A549 (cell line): ENCODE measurements at regions of chr17 and their contacts with region 1.

Region 1: DNA sequence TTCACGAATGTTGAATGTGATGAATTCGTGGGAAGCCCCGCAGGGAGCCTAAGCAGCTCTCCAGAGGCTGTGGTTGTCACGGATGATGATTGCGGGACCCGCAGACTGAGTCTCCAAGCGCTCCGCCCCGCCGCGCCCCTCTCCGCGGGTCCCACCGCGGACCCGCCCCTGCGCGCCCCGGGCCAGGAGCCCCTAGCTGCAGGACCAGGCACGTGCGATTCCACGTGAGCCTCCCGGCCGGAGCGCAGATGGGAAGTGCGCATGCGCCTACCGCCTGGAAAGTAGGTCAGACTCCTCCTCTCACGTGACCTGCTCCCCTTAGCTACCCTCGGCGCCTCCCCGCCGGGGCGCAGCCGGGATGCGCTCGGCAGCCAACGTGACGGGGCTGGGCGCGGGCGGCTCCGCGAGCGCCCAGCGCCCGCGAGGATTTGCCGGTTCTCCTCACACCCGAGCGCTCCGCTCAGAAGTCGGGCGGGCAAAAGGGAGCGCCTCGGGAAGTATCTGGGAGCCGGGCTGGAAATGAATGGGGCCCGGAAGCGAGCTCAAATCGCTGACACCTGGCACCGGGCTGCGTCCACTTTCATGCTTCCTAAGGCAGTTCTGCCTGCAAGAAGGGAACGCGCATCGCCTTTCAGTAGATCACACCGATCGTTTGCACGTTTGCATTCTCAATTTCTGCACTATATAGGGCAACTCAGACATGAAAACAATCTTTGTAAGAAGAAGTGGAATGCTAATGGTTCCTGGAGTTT is 26.4 kb upstream of the HLF start:
- DNase-seq: peak; percentile 94 to 99
- ATAC-seq: peak; percentile 97 to 99
- H3K4me3 ChIP-seq: peak overlapping the region; percentile 56
- H3K27ac ChIP-seq: peak overlapping the region; percentile 70 to 76
- H3K4me1 ChIP-seq: peaks cover 12% of the 10 kb centered on the region; the same call in 2 of the 3 replicates
- CTCF ChIP-seq: no peak
- EP300 ChIP-seq: no peak
- POLR2A ChIP-seq: peak; percentile 55
- RAD21 ChIP-seq: no peak

Region 2: GRCh38 chr17:55037828-55038227 is 200.5 kb before region 1 on chr17:
- CTCF ChIA-PET with region 1: no interaction called
- POLR2A ChIA-PET with region 1: no interaction called
- DNase-seq: no peak
- ATAC-seq: no peak
- H3K4me3 ChIP-seq: no peak overlapping the region
- H3K27ac ChIP-seq: no peak overlapping the region
- H3K4me1 ChIP-seq: no peaks in the 10 kb centered on the region
- CTCF ChIP-seq: no peak
- EP300 ChIP-seq: no peak
- POLR2A ChIP-seq: no peak
- RAD21 ChIP-seq: no peak

Region 3: GRCh38 chr17:55254375-55254774 is 16.0 kb after region 1 on chr17:
- CTCF ChIA-PET with region 1: interaction called, 12 read pairs
- POLR2A ChIA-PET with region 1: interaction called, 3 read pairs
- DNase-seq: no peak
- ATAC-seq: no peak
- H3K4me3 ChIP-seq: no peak overlapping the region
- H3K27ac ChIP-seq: no peak overlapping the region
- H3K4me1 ChIP-seq: no peaks in the 10 kb centered on the region
- CTCF ChIP-seq: no peak
- EP300 ChIP-seq: no peak
- POLR2A ChIP-seq: no peak
- RAD21 ChIP-seq: no peak

Region 4: DNA sequence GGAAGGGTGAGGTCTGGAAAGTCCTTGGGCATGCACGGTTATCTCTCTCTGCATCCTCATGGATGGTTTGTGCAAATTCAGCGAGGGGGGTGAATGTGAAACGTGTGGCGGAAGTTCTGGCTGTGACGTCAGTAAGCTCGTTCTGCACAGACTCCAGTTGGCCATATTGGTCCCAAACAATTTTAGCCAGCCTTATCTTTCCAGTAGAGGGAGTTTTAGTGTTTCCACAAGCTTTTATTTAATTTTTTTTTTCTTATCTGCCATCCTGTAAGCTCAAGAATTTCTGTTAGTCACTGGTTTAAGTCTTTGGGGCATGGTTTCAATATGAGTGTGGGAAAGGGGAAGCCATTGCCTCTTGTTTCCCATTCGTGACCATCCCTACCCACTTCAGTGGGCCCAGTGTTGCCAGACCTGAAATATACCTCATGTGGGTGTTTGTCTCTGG is 65.4 kb after region 1 on chr17:
- CTCF ChIA-PET with region 1: no interaction called
- POLR2A ChIA-PET with region 1: no interaction called
- DNase-seq: no peak
- ATAC-seq: peak in 1 of 2 experiments; percentile 41; a peak in 3 of 6 replicates
- H3K4me3 ChIP-seq: no peak overlapping the region
- H3K27ac ChIP-seq: no peak overlapping the region
- H3K4me1 ChIP-seq: no peaks in the 10 kb centered on the region; the same call in 2 of the 3 replicates
- CTCF ChIP-seq: 0 out of 3 replicates have a peak, but pooled peaks have one; percentile 10
- EP300 ChIP-seq: no peak
- POLR2A ChIP-seq: no peak
- RAD21 ChIP-seq: no peak; a peak in 1 of 5 replicates